Posterior vena cava (tissue), 2 donors: ENCODE measurements at regions of chr12 and their contacts with region 1.

Region 1: GRCh38 chr12:32151086-32151485 is 44.4 kb downstream of the BICD1 start:
- DNase-seq: no peak

Region 2: DNA sequence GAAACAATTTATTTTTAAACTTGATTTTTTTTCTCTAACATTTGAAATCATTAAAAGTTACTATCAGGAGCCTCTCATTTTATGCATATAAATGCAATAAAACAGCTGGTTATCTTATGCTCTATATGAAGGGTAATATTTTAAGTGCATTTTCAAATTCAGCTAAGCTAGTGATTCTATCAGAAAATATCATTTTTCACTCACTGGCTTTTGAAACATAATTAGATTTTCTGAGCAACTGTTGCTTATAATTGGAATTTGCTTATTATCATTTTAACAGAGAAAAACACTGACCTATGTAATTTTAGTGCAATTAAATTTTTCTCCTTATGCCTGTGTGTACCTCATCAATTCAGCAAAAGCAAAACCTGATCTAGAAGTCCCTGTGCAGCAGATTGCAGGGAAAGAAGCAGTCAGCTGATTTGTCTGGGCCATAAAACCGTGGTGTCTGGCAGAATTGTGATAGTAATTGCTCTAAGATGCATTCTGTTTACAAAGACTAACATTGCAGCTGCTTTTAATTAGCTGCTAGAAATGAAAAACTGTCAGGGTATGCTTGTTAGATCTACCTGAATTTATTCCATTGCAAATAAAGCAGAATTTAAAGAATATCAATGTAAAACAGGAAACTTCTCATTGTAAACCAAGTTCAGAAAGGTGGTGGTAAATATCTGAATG is 30.6 kb after region 1 on chr12:
- intact Hi-C with region 1: no loop called
- DNase-seq: no peak

Region 3: GRCh38 chr12:32285489-32285888 is 134.4 kb after region 1 on chr12:
- intact Hi-C with region 1: loop called in 1 of 2 experiments (anchors 5 kb)
- DNase-seq: no peak